H1 (cell line): ENCODE measurements at regions of chr5 and their contacts with region 1.

Region 1: GRCh38 chr5:133868946-133869518 is 99.4 kb downstream of the C5orf15 start:
- DNase-seq: peak in 1 of 2 experiments; percentile 77
- H3K4me3 ChIP-seq: no peak overlapping the region
- H3K27ac ChIP-seq: no peak overlapping the region
- H3K4me1 ChIP-seq: peaks cover 0 to 3% (median 0%) of the 10 kb centered on the region in 4 experiments; a peak in 3 of 7 replicates
- H3K27me3 ChIP-seq: no peaks in the 10 kb centered on the region
- CTCF ChIP-seq: peak; percentile 63 to 82 (median 73)
- EP300 ChIP-seq: no peak
- POLR2A ChIP-seq: no peak
- RAD21 ChIP-seq: peak; percentile 72 to 79

Region 2: DNA sequence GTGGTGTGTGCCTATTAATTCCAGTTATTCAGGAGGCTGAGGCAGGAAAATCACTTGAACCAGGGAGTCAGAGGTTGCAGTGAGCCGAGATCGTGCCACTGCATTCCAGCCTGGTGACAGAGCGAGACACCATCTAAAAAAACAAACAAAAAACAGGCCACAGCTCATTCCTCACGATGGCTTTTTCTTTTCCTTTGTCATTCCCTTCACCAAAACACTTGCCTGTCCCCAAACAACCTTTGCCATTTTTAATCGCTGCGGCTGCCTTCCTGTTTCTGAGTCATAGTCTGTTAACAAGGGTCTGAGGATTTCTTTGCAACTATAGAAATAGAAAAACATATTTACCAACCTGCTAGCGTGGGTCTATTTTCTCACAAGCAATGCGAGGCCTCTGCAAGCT is 133.7 kb before region 1 on chr5:
- CTCF ChIA-PET with region 1: no interaction called
- POLR2A ChIA-PET with region 1: no interaction called
- DNase-seq: peak in 1 of 2 experiments; percentile 16
- H3K4me3 ChIP-seq: no peak overlapping the region
- H3K27ac ChIP-seq: no peak overlapping the region
- H3K4me1 ChIP-seq: no peaks in the 10 kb centered on the region
- H3K27me3 ChIP-seq: no peaks in the 10 kb centered on the region
- CTCF ChIP-seq: no peak
- EP300 ChIP-seq: no peak
- POLR2A ChIP-seq: no peak
- RAD21 ChIP-seq: no peak

Region 3: GRCh38 chr5:133754575-133755169 is 114.4 kb before region 1 on chr5:
- CTCF ChIA-PET with region 1: interaction called, 63 read pairs
- POLR2A ChIA-PET with region 1: no interaction called
- DNase-seq: peak; percentile 9 to 54
- H3K4me3 ChIP-seq: no peak overlapping the region
- H3K27ac ChIP-seq: no peak overlapping the region
- H3K4me1 ChIP-seq: no peaks in the 10 kb centered on the region
- H3K27me3 ChIP-seq: peaks cover 0 to 6% (median 0%) of the 10 kb centered on the region in 4 experiments; a peak in 3 of 7 replicates
- CTCF ChIP-seq: peak; percentile 75 to 95 (median 80)
- EP300 ChIP-seq: no peak
- POLR2A ChIP-seq: no peak
- RAD21 ChIP-seq: peak; percentile 70 to 75

Region 4: GRCh38 chr5:133826976-133827375 is 42.1 kb before region 1 on chr5:
- CTCF ChIA-PET with region 1: interaction called, 16 read pairs
- POLR2A ChIA-PET with region 1: no interaction called
- DNase-seq: no peak
- H3K4me3 ChIP-seq: no peak overlapping the region
- H3K27ac ChIP-seq: no peak overlapping the region
- H3K4me1 ChIP-seq: no peaks in the 10 kb centered on the region
- H3K27me3 ChIP-seq: no peaks in the 10 kb centered on the region; a peak in 2 of 7 replicates
- CTCF ChIP-seq: no peak
- EP300 ChIP-seq: no peak
- POLR2A ChIP-seq: no peak
- RAD21 ChIP-seq: no peak

Region 5: DNA sequence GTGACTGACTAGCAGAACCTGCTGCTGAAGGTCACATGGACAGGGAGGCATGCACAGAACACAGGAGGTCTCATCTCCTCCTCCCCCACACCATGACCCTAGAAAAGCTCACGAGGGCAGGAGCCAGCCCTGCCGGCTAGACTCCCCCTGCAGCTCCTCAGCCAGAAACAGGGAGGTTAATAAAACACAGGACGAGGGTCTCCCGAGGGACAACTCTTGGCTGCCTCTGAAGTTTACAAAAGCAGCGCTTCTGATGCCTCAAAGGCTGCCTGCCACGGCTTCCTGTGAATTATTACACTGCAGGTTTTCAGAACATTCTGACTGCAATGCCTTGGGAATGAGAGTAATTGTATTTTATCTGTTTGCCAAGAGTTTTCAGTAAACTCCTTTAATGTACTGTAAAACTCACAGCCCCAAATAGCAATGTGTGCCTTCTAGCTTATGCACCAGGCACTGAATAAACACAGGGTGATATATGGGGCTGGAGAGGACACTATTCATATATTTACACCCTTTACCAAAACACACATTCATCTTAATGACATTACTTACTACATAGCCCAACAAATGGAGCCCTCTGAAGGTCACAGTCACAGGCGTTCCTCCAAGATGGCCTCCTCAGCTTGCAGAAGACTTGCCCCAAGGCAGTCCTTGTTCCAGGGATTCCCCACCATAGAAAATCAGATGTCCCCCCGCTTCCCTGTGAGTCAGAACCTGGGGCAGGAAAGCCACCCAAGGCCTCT is 15.7 kb after region 1 on chr5:
- CTCF ChIA-PET with region 1: interaction called, 150 read pairs
- POLR2A ChIA-PET with region 1: no interaction called
- DNase-seq: no peak
- H3K4me3 ChIP-seq: no peak overlapping the region
- H3K27ac ChIP-seq: no peak overlapping the region
- H3K4me1 ChIP-seq: peaks cover 0 to 2% (median 0%) of the 10 kb centered on the region in 4 experiments; a peak in 1 of 7 replicates
- H3K27me3 ChIP-seq: no peaks in the 10 kb centered on the region
- CTCF ChIP-seq: no peak
- EP300 ChIP-seq: no peak
- POLR2A ChIP-seq: no peak
- RAD21 ChIP-seq: no peak

Region 6: GRCh38 chr5:133938929-133939328 is 69.9 kb after region 1 on chr5:
- CTCF ChIA-PET with region 1: interaction called, 74 read pairs
- POLR2A ChIA-PET with region 1: no interaction called
- DNase-seq: no peak
- H3K4me3 ChIP-seq: no peak overlapping the region
- H3K27ac ChIP-seq: no peak overlapping the region
- H3K4me1 ChIP-seq: no peaks in the 10 kb centered on the region; a peak in 1 of 7 replicates
- H3K27me3 ChIP-seq: no peaks in the 10 kb centered on the region
- CTCF ChIP-seq: no peak
- EP300 ChIP-seq: no peak
- POLR2A ChIP-seq: no peak
- RAD21 ChIP-seq: no peak

Region 7: GRCh38 chr5:133985540-133986180 is 116.6 kb after region 1 on chr5:
- CTCF ChIA-PET with region 1: no interaction called
- POLR2A ChIA-PET with region 1: no interaction called
- DNase-seq: no peak
- H3K4me3 ChIP-seq: no peak overlapping the region
- H3K27ac ChIP-seq: no peak overlapping the region
- H3K4me1 ChIP-seq: no peaks in the 10 kb centered on the region
- H3K27me3 ChIP-seq: no peaks in the 10 kb centered on the region
- CTCF ChIP-seq: no peak
- EP300 ChIP-seq: no peak
- POLR2A ChIP-seq: no peak
- RAD21 ChIP-seq: no peak